CD8-positive, alpha-beta memory T cell (primary cell): ENCODE measurements at regions of chr11 and their contacts with region 1.

Region 1: DNA sequence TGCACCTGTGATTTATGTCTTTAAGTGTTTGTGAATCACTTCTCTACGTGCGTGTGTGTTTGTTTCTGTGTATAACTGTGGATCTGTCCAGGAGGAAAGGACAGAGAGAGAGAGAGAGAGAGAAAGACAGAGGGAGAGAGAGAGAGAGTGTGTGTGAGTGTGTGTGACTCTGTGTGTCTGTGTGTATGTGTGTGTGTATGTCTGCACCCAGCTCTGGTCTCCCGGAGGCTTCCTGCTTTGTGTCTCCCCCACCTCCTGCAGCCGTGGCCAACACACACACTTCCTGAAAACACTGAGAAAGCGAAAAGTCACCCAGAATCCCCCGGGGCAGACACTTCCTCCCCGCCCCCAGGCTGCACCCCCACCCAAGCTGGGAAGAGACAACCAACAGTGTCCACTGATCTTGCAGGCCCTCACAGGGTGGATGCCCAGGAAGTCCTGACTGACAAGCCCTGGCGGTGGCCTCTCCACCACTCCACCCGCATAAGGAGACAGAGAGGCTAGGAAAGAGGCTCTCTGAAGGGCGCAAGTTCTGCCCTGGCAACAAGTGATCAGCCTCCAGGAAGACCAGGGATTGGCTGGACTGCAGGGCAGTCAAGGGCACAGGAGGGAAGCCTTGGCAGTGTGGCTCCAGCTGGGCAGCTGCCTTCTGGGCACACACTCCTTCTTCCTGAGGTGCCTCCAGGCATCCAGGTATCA is 30.0 kb downstream of the ARAP1 start:
- DNase-seq: peak; percentile 75 to 92 (median 87)
- H3K4me3 ChIP-seq: peak overlapping the region; percentile 81
- H3K4me3 Mint-ChIP-seq: peak overlapping the region; percentile 89 to 95 (median 92)
- H3K27ac ChIP-seq: peak overlapping the region; percentile 84
- H3K27ac Mint-ChIP-seq: peak overlapping the region; percentile 87 to 99 (median 96)
- H3K4me1 ChIP-seq: peaks cover 53% of the 10 kb centered on the region
- H3K4me1 Mint-ChIP-seq: peaks cover 57 to 86% (median 62%) of the 10 kb centered on the region in 3 donors
- H3K27me3 ChIP-seq: no peaks in the 10 kb centered on the region
- H3K27me3 Mint-ChIP-seq: peaks cover 0 to 9% of the 10 kb centered on the region in 2 donors

Region 2: DNA sequence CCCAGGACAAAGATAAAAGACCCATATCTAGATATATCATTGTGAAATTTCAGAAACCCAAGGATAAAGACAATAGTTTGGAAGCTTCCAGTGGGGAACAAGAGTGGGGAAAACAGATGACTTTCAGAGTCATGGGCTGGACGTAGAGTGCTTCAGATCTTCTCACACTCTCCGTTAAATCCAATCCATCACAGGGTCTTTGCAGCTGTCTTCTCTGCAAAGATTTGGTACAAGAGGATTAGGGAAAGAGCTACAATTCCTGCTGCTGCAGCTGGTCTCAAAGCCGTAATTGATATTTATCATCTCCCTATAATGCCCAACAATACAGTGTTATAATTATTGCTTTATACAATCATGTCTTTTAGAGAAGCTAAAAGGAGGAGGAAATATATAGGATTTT is 224.5 kb before region 1 on chr11:
- CTCF ChIA-PET with region 1: no interaction called
- POLR2A ChIA-PET with region 1: no interaction called
- DNase-seq: no peak
- H3K4me3 ChIP-seq: no peak overlapping the region
- H3K4me3 Mint-ChIP-seq: no peak overlapping the region
- H3K27ac ChIP-seq: no peak overlapping the region
- H3K27ac Mint-ChIP-seq: no peak overlapping the region
- H3K4me1 ChIP-seq: no peaks in the 10 kb centered on the region
- H3K4me1 Mint-ChIP-seq: peaks cover 8 to 15% (median 12%) of the 10 kb centered on the region in 3 donors
- H3K27me3 ChIP-seq: no peaks in the 10 kb centered on the region
- H3K27me3 Mint-ChIP-seq: peaks cover 0 to 3% of the 10 kb centered on the region in 2 donors

Region 3: DNA sequence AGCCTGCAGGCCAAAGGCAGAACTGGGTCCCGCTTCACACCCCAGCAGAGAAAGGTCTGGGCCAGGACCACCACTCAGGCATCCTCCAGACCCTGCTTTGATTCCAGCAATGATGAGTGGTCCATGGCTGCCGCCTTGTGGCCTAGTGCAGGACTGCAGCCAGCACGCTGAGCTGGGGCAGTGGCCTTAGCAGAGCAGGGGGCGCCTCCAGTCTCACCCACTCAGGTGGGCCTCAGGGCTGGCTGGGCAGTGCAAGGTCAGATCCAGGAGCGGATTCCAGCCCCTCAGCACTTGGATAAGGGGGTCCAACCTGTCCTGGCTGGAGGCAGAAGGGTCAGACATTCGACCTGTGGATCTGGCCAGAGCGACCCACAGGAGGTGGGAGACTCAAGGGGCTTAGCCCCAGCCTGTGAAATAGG is 38.4 kb before region 1 on chr11:
- CTCF ChIA-PET with region 1: interaction called, 11 read pairs
- POLR2A ChIA-PET with region 1: no interaction called
- DNase-seq: peak; percentile 43 to 71 (median 46)
- H3K4me3 ChIP-seq: no peak overlapping the region
- H3K4me3 Mint-ChIP-seq: no peak overlapping the region
- H3K27ac ChIP-seq: no peak overlapping the region
- H3K27ac Mint-ChIP-seq: peak overlapping the region in 3 of 8 donors; percentile 19 to 51 (median 42)
- H3K4me1 ChIP-seq: no peaks in the 10 kb centered on the region
- H3K4me1 Mint-ChIP-seq: peaks cover 17 to 25% (median 21%) of the 10 kb centered on the region in 3 donors
- H3K27me3 ChIP-seq: no peaks in the 10 kb centered on the region
- H3K27me3 Mint-ChIP-seq: no peaks in the 10 kb centered on the region

Region 4: GRCh38 chr11:72736452-72737069 is 14.4 kb after region 1 on chr11:
- CTCF ChIA-PET with region 1: interaction called, 14 read pairs
- POLR2A ChIA-PET with region 1: interaction called, 8 read pairs
- DNase-seq: peak; percentile 66 to 89 (median 84)
- H3K4me3 ChIP-seq: peak overlapping the region; percentile 32
- H3K4me3 Mint-ChIP-seq: peak overlapping the region; percentile 9 to 89 (median 61)
- H3K27ac ChIP-seq: peak overlapping the region; percentile 81
- H3K27ac Mint-ChIP-seq: peak overlapping the region; percentile 97 to 100 (median 98)
- H3K4me1 ChIP-seq: peaks cover 63% of the 10 kb centered on the region
- H3K4me1 Mint-ChIP-seq: peaks cover 52 to 76% (median 55%) of the 10 kb centered on the region in 3 donors
- H3K27me3 ChIP-seq: no peaks in the 10 kb centered on the region
- H3K27me3 Mint-ChIP-seq: no peaks in the 10 kb centered on the region

Region 5: DNA sequence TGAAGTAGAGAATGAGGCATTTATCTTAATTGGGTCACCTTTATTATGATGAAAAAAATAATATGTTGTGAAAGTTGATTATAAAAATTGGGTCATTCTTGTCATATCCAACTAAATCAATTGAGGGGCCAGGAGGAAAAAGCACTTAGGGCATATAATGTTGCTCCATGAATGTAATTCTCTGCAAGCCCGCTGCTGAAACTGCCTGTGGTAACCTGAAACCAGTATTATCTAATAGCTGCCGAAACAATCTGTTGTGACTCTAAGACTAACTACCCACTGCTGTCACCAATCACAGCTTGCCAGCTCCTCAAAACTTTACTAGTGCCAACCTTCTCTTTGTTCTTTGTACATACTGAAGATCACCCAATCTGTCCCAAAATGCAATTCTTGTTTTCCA is 207.8 kb after region 1 on chr11:
- CTCF ChIA-PET with region 1: no interaction called
- POLR2A ChIA-PET with region 1: no interaction called
- DNase-seq: no peak
- H3K4me3 ChIP-seq: no peak overlapping the region
- H3K4me3 Mint-ChIP-seq: no peak overlapping the region
- H3K27ac ChIP-seq: no peak overlapping the region
- H3K27ac Mint-ChIP-seq: peak overlapping the region in 1 of 8 donors; percentile 13
- H3K4me1 ChIP-seq: no peaks in the 10 kb centered on the region
- H3K4me1 Mint-ChIP-seq: peaks cover 0 to 4% (median under 1%) of the 10 kb centered on the region in 3 donors
- H3K27me3 ChIP-seq: no peaks in the 10 kb centered on the region
- H3K27me3 Mint-ChIP-seq: peaks cover 0 to 2% of the 10 kb centered on the region in 2 donors